ENCODE measurements at regions of chr12 and their contacts with region 1.

Region 1: GRCh38 chr12:12999959-13000615 is at the start of gene HEBP1:
- DNase-seq: peak; percentile 76
- ATAC-seq: peak; percentile 69
- H3K4me3 ChIP-seq: peak within 1 kb of the TSS; percentile 100
- H3K27ac ChIP-seq: peak within 1 kb of the TSS; percentile 14
- H3K4me1 ChIP-seq: peaks cover 19% of the 10 kb centered on the region
- H3K27me3 ChIP-seq: no peaks in the 10 kb centered on the region
- CTCF ChIP-seq: no peak
- total RNA-seq, gene HEBP1: 6.2 and 8.2 TPM in 2 replicates

Region 2: DNA sequence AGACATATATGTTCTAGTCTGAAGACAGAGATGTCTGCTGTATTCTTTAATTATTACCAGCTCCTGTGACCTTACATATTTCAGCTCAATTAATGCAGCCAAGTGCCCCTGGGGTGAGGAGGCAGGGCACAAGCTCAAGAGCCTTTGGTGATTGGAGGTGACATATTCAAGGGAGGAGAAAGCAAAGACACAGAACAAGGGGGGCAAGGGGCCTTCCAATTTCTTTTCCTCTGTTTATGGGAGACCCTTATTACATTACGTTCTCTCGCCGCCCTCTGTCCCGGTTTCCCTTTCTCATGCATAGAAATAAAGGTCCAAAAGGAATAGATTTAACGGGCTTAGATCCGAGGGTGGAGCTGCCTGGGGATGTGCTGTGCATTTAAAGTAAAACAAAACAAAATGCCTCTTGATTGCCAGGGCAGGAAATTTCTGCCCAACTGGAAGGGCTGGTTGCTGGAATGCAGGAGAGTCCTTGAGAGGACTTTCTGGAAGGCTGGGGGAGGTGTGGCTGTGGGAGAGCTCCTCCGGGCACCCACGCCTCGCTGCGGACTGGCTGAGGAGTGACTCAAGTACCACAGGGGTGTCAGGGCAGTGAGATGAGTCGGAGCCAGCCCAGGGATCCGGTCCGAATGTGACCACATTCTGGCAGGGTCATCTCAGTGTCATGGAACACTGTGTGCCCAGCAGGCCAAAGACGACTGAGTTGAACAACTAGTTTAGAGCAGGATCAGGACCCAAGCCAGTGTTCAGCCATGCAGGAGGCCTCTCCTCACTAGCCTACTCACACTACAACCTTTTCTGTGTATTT is 135.5 kb after region 1 on chr12:
- CTCF ChIA-PET with region 1: no interaction called
- POLR2A ChIA-PET with region 1: no interaction called
- intact Hi-C with region 1: loop called (anchors 5 kb)
- DNase-seq: peak; percentile 97
- ATAC-seq: peak; percentile 94
- H3K4me3 ChIP-seq: peak overlapping the region; percentile 62
- H3K27ac ChIP-seq: peak overlapping the region; percentile 89
- H3K4me1 ChIP-seq: peaks cover 40% of the 10 kb centered on the region
- H3K27me3 ChIP-seq: no peaks in the 10 kb centered on the region
- CTCF ChIP-seq: peak; percentile 31; the same call in 1 of the 2 replicates

Region 3: GRCh38 chr12:13223179-13223859 is 223.2 kb after region 1 on chr12:
- CTCF ChIA-PET with region 1: no interaction called
- POLR2A ChIA-PET with region 1: no interaction called
- intact Hi-C with region 1: loop called (anchors 5 kb)
- DNase-seq: peak; percentile 94
- ATAC-seq: peak; percentile 84
- H3K4me3 ChIP-seq: no peak overlapping the region
- H3K27ac ChIP-seq: peak overlapping the region; percentile 84
- H3K4me1 ChIP-seq: peaks cover 31% of the 10 kb centered on the region
- H3K27me3 ChIP-seq: no peaks in the 10 kb centered on the region
- CTCF ChIP-seq: no peak

Region 4: GRCh38 chr12:13304924-13305323 is 304.8 kb after region 1 on chr12:
- CTCF ChIA-PET with region 1: no interaction called
- POLR2A ChIA-PET with region 1: no interaction called
- intact Hi-C with region 1: no loop called
- DNase-seq: no peak
- ATAC-seq: no peak
- H3K4me3 ChIP-seq: no peak overlapping the region
- H3K27ac ChIP-seq: no peak overlapping the region
- H3K4me1 ChIP-seq: no peaks in the 10 kb centered on the region
- H3K27me3 ChIP-seq: peaks cover 26% of the 10 kb centered on the region; the same call in 1 of the 2 replicates
- CTCF ChIP-seq: no peak

Measured in PC-3 (cell line).